CD4-positive, alpha-beta T cell (primary cell): ENCODE measurements at regions of chr1 and their contacts with region 1.

Region 1: GRCh38 chr1:246699095-246699735 is 25.0 kb upstream of the SCCPDH start:
- DNase-seq: peak; percentile 58 to 90 (median 70)
- ATAC-seq: peak; percentile 89
- H3K4me3 ChIP-seq: peak overlapping the region; percentile 19
- H3K4me3 Mint-ChIP-seq: peak overlapping the region; percentile 70
- H3K27ac ChIP-seq: no peak overlapping the region
- H3K27ac Mint-ChIP-seq: no peak overlapping the region
- H3K4me1 ChIP-seq: peaks cover 17% of the 10 kb centered on the region
- H3K4me1 Mint-ChIP-seq: peaks cover 6% of the 10 kb centered on the region
- H3K27me3 ChIP-seq: no peaks in the 10 kb centered on the region
- H3K27me3 Mint-ChIP-seq: peaks cover 4% of the 10 kb centered on the region
- CTCF ChIP-seq: peak; percentile 80

Region 2: DNA sequence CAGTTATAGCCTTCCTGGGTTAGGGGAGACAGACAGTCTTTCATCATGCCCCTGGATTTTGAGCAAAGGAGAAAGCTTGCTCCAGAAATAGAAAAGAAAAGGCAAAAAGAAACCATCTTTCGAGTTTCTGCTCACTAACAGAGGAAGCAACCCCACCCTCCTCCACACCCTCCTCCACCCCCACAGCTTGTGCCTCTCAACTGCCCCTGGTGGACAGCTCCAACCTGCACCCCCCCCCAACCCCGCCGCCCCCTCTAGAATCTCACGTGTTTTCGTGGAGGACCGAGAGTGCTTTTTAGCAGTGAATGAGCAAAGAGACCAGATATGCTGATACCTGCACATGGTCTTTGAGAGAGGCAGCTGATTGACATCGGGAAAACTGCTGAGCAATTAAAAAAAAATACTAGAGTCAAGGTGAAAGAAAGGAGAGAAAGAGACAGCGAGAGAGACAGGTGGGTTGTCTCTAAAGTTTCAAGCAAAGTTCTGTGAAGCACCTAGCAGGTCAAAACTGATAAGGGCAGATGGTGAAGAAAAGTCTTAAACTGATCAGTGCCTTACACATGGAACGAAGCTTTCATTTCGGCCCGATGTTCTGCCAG is 1186.1 kb before region 1 on chr1:
- CTCF ChIA-PET with region 1: no interaction called
- POLR2A ChIA-PET with region 1: no interaction called
- intact Hi-C with region 1: no loop called
- DNase-seq: peak in 1 of 14 experiments; percentile 9
- ATAC-seq: no peak
- H3K4me3 ChIP-seq: no peak overlapping the region
- H3K4me3 Mint-ChIP-seq: no peak overlapping the region
- H3K27ac ChIP-seq: no peak overlapping the region
- H3K27ac Mint-ChIP-seq: no peak overlapping the region
- H3K4me1 ChIP-seq: no peaks in the 10 kb centered on the region
- H3K4me1 Mint-ChIP-seq: no peaks in the 10 kb centered on the region
- H3K27me3 ChIP-seq: peaks cover 0 to 8% of the 10 kb centered on the region in 2 experiments
- H3K27me3 Mint-ChIP-seq: peaks cover 36% of the 10 kb centered on the region
- CTCF ChIP-seq: no peak

Region 3: DNA sequence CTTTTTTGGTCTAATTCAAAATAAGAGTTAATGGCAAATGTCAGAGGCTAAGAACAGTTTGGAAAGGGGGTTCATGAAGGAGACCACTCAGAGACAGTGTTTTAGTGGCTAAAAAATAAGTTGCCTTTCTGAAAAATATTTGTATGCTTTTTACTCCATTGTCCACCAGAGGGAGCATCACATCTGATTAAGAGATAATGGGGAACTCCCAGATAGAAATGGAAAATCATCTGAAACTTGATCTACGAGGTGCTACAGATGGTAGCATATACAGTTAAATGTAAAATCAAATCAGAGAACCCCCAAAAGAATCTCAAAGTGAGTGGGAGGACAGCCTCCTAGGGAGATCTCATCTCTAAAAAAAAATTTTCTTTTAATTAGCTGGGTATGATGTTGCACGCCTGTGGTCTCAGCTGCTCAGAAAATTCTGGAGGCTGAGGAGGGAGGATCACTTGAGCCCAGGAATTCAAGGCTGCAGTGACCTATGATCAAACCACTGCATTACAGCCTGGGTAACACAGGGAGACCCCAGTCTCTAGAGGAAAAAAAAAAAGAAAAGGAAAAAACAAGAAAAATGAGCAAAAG is 201.8 kb before region 1 on chr1:
- CTCF ChIA-PET with region 1: no interaction called
- POLR2A ChIA-PET with region 1: no interaction called
- intact Hi-C with region 1: loop called (anchors 1 kb)
- DNase-seq: peak in 4 of 14 experiments; percentile 31 to 84 (median 81)
- ATAC-seq: peak; percentile 78
- H3K4me3 ChIP-seq: no peak overlapping the region
- H3K4me3 Mint-ChIP-seq: no peak overlapping the region
- H3K27ac ChIP-seq: no peak overlapping the region
- H3K27ac Mint-ChIP-seq: no peak overlapping the region
- H3K4me1 ChIP-seq: no peaks in the 10 kb centered on the region
- H3K4me1 Mint-ChIP-seq: peaks cover 17% of the 10 kb centered on the region
- H3K27me3 ChIP-seq: no peaks in the 10 kb centered on the region
- H3K27me3 Mint-ChIP-seq: no peaks in the 10 kb centered on the region
- CTCF ChIP-seq: peak; percentile 75

Region 4: GRCh38 chr1:246647113-246647512 is 52.1 kb before region 1 on chr1:
- CTCF ChIA-PET with region 1: no interaction called
- POLR2A ChIA-PET with region 1: no interaction called
- intact Hi-C with region 1: no loop called
- DNase-seq: no peak
- ATAC-seq: no peak
- H3K4me3 ChIP-seq: no peak overlapping the region
- H3K4me3 Mint-ChIP-seq: no peak overlapping the region
- H3K27ac ChIP-seq: no peak overlapping the region
- H3K27ac Mint-ChIP-seq: no peak overlapping the region
- H3K4me1 ChIP-seq: no peaks in the 10 kb centered on the region
- H3K4me1 Mint-ChIP-seq: peaks cover 24% of the 10 kb centered on the region
- H3K27me3 ChIP-seq: no peaks in the 10 kb centered on the region
- H3K27me3 Mint-ChIP-seq: no peaks in the 10 kb centered on the region
- CTCF ChIP-seq: no peak

Region 5: GRCh38 chr1:247551721-247552120 is 852.5 kb after region 1 on chr1:
- CTCF ChIA-PET with region 1: no interaction called
- POLR2A ChIA-PET with region 1: no interaction called
- intact Hi-C with region 1: no loop called
- DNase-seq: no peak
- ATAC-seq: no peak
- H3K4me3 ChIP-seq: no peak overlapping the region
- H3K4me3 Mint-ChIP-seq: no peak overlapping the region
- H3K27ac ChIP-seq: no peak overlapping the region
- H3K27ac Mint-ChIP-seq: no peak overlapping the region
- H3K4me1 ChIP-seq: no peaks in the 10 kb centered on the region
- H3K4me1 Mint-ChIP-seq: peaks cover 11% of the 10 kb centered on the region
- H3K27me3 ChIP-seq: peaks cover 0 to 4% of the 10 kb centered on the region in 2 experiments
- H3K27me3 Mint-ChIP-seq: peaks cover 16% of the 10 kb centered on the region
- CTCF ChIP-seq: no peak